ENCODE measurements at regions of chr1 and their contacts with region 1.

Region 1: GRCh38 chr1:243287652-243288051 is 31.8 kb downstream of the SDCCAG8 start:
- DNase-seq: peak; percentile 95
- H3K4me3 ChIP-seq: peak overlapping the region in 1 of 3 experiments; percentile 0
- H3K27ac ChIP-seq: peak overlapping the region; percentile 98
- H3K4me1 ChIP-seq: peaks cover 46% of the 10 kb centered on the region
- H3K27me3 ChIP-seq: no peaks in the 10 kb centered on the region
- CTCF ChIP-seq: no peak
- POLR2A ChIP-seq: no peak

Region 2: GRCh38 chr1:242673652-242674051 is 614.0 kb before region 1 on chr1:
- CTCF ChIA-PET with region 1: no interaction called
- POLR2A ChIA-PET with region 1: no interaction called
- dilution Hi-C with region 1: no loop called
- intact Hi-C with region 1: no loop called
- DNase-seq: no peak
- H3K4me3 ChIP-seq: no peak overlapping the region
- H3K27ac ChIP-seq: no peak overlapping the region
- H3K4me1 ChIP-seq: no peaks in the 10 kb centered on the region
- H3K27me3 ChIP-seq: no peaks in the 10 kb centered on the region
- CTCF ChIP-seq: no peak
- POLR2A ChIP-seq: no peak

Region 3: GRCh38 chr1:243246916-243247315 is 40.7 kb before region 1 on chr1:
- CTCF ChIA-PET with region 1: no interaction called
- POLR2A ChIA-PET with region 1: no interaction called
- dilution Hi-C with region 1: no loop called
- intact Hi-C with region 1: no loop called
- DNase-seq: peak; percentile 58
- H3K4me3 ChIP-seq: no peak overlapping the region
- H3K27ac ChIP-seq: no peak overlapping the region
- H3K4me1 ChIP-seq: peaks cover 39% of the 10 kb centered on the region
- H3K27me3 ChIP-seq: no peaks in the 10 kb centered on the region
- CTCF ChIP-seq: no peak
- POLR2A ChIP-seq: no peak

Region 4: DNA sequence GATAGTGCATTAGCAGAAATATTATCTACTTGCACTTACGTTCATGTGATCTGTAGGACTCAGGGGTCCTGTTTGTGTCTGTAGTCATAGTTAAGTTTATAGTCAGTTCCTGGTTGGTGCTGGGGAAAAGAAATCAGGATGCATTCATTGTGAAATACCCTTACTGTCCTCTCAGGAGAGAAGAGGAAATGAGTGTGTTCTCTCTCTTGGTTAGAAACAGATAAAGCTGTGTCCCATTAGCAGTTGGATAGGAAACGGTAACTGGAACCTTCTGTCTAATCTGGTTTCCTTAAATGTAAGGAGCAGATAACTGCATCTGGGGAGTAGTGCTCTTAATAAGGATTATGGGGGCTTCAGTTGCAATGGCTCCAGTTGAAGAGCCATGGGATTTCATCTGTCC is 22.9 kb before region 1 on chr1:
- CTCF ChIA-PET with region 1: interaction called, 8 read pairs
- POLR2A ChIA-PET with region 1: interaction called, 6 read pairs
- dilution Hi-C with region 1: no loop called
- intact Hi-C with region 1: loop called (anchors 1 kb)
- DNase-seq: peak; percentile 93
- H3K4me3 ChIP-seq: no peak overlapping the region
- H3K27ac ChIP-seq: peak overlapping the region; percentile 70
- H3K4me1 ChIP-seq: peaks cover 66% of the 10 kb centered on the region
- H3K27me3 ChIP-seq: no peaks in the 10 kb centered on the region
- CTCF ChIP-seq: no peak
- POLR2A ChIP-seq: peak; percentile 80

Region 5: GRCh38 chr1:243748706-243749283 is 461.1 kb after region 1 on chr1:
- CTCF ChIA-PET with region 1: no interaction called
- POLR2A ChIA-PET with region 1: no interaction called
- dilution Hi-C with region 1: no loop called
- intact Hi-C with region 1: no loop called
- DNase-seq: peak; percentile 79
- H3K4me3 ChIP-seq: no peak overlapping the region
- H3K27ac ChIP-seq: no peak overlapping the region
- H3K4me1 ChIP-seq: peaks cover 4% of the 10 kb centered on the region
- H3K27me3 ChIP-seq: no peaks in the 10 kb centered on the region
- CTCF ChIP-seq: peak; percentile 55 to 58
- POLR2A ChIP-seq: no peak

Measured in endothelial cell of umbilical vein (primary cell).